MCF 10A (cell line): ENCODE measurements at regions of chr6 and their contacts with region 1.

Region 1: GRCh38 chr6:31729515-31729978 is 448 bp upstream of the DDAH2 start:
- DNase-seq: peak; percentile 88
- H3K4me3 Mint-ChIP-seq: peak overlapping the region; percentile 92
- H3K27ac Mint-ChIP-seq: peak overlapping the region; percentile 86
- H3K4me1 Mint-ChIP-seq: peaks cover 7% of the 10 kb centered on the region
- H3K27me3 Mint-ChIP-seq: no peaks in the 10 kb centered on the region
- CTCF ChIP-seq: no peak

Region 2: DNA sequence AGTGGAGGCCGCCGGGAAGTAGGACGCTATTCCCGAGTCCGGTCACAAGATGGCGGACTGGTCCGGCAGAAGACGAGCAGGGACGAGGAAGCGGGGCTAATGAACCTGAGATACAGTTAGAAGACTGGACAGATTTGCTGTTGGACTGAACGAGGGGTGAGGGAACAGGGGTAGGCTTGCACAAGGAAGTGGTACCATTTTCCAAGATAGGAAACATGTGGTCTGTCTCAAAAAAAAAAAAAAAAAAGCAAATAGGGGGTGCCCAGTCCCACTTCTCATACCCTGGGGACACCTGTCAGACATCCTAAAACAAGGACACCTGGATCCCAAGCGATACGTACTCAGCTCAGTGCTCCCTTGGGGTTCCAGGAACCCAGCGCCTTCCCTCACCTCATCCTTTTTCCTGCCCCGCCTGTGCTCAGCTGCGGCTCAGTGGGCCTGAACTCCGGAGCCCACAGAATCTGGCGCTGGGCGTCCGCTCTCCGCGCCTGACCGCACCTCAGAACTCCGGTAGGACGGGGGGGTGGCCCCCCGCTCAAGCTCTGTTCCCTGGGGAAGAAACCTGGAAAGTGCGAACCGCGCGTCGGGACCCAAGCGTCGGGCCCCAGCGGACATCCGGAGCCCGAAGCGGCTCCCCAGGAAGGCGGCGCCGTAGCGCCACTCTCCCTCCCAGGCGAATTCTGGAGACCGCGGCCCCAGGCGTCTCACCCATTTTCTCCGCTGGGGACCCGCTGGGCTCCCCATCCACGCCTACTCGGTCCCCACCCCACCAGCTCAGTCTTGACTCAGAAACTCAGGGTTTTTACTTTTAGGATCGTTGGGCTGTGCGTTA is 48.5 kb before region 1 on chr6 and contains the start of gene LY6G5C:
- CTCF ChIA-PET with region 1: interaction called, 5 read pairs
- POLR2A ChIA-PET with region 1: no interaction called
- intact Hi-C with region 1: loop called (anchors 2 kb)
- DNase-seq: peak; percentile 81
- H3K4me3 Mint-ChIP-seq: peak within 1 kb of the TSS; percentile 73
- H3K27ac Mint-ChIP-seq: peak within 1 kb of the TSS; percentile 87
- H3K4me1 Mint-ChIP-seq: peaks cover 12% of the 10 kb centered on the region
- H3K27me3 Mint-ChIP-seq: peaks cover 18% of the 10 kb centered on the region
- CTCF ChIP-seq: peak; percentile 84
- total RNA-seq, gene LY6G5C: 0.64 and 1.4 TPM in 2 replicates

Region 3: GRCh38 chr6:31702819-31703522 is 26.6 kb before region 1 on chr6 and contains the start of gene ABHD16A:
- CTCF ChIA-PET with region 1: no interaction called
- POLR2A ChIA-PET with region 1: interaction called, 29 read pairs
- intact Hi-C with region 1: loop called (anchors 1 kb)
- DNase-seq: peak; percentile 98
- H3K4me3 Mint-ChIP-seq: peak within 1 kb of the TSS; percentile 95
- H3K27ac Mint-ChIP-seq: peak within 1 kb of the TSS; percentile 89
- H3K4me1 Mint-ChIP-seq: peaks cover 5% of the 10 kb centered on the region
- H3K27me3 Mint-ChIP-seq: no peaks in the 10 kb centered on the region
- CTCF ChIP-seq: no peak
- total RNA-seq, gene ABHD16A: 32.1 and 42.7 TPM in 2 replicates

Region 4: DNA sequence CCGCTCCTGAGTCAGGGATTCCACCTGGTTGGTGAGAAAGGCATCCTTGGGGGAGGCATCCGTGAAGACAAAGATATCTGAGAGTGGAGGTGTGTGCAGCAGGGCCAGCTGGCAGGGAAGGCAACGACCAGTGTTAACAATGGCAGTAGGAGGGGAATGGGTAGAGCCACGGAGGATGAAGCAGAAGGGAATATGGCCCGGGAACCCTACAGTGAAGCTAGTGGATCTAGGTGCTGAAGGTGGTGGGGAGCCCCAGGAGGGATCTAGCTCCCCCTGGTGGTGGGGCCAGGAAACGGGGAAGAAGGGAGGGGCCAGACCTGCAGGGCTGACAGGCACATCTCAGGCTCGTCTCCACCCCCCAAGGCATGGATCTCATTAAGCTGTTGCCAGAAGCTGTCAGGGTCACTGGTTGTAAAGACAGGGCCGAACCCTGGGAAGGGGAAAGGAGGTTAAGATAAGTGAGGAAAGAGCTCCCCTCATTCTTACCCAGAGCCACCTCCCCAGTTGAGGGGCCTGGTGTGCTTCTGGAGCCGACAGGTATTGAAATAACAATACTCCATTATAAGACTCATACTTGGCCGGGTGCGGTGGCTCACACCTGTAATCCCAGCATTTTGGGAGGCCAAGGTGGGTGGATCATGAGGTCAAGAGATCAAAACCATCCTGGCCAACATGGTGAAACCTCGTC is 40.3 kb after region 1 on chr6:
- CTCF ChIA-PET with region 1: interaction called, 19 read pairs
- POLR2A ChIA-PET with region 1: interaction called, 3 read pairs
- intact Hi-C with region 1: loop called (anchors 2 kb)
- DNase-seq: peak; percentile 74
- H3K4me3 Mint-ChIP-seq: no peak overlapping the region
- H3K27ac Mint-ChIP-seq: no peak overlapping the region
- H3K4me1 Mint-ChIP-seq: peaks cover 5% of the 10 kb centered on the region
- H3K27me3 Mint-ChIP-seq: no peaks in the 10 kb centered on the region
- CTCF ChIP-seq: peak; percentile 65

Region 5: GRCh38 chr6:31815025-31815838 is 85.7 kb after region 1 on chr6 and contains the starts of genes HSPA1A and HSPA1L:
- CTCF ChIA-PET with region 1: interaction called, 4 read pairs
- POLR2A ChIA-PET with region 1: interaction called, 52 read pairs
- intact Hi-C with region 1: no loop called
- DNase-seq: peak; percentile 99
- H3K4me3 Mint-ChIP-seq: peak within 1 kb of the TSS; percentile 89
- H3K27ac Mint-ChIP-seq: peak within 1 kb of the TSS; percentile 97
- H3K4me1 Mint-ChIP-seq: peaks cover 11% of the 10 kb centered on the region
- H3K27me3 Mint-ChIP-seq: no peaks in the 10 kb centered on the region
- CTCF ChIP-seq: no peak
- total RNA-seq, gene HSPA1A: 20.3 and 34.0 TPM in 2 replicates
- total RNA-seq, gene HSPA1L: 0.35 and 0.79 TPM in 2 replicates